Naive thymus-derived CD4-positive, alpha-beta T cell (primary cell): ENCODE measurements at regions of chr6 and their contacts with region 1.

Region 1: DNA sequence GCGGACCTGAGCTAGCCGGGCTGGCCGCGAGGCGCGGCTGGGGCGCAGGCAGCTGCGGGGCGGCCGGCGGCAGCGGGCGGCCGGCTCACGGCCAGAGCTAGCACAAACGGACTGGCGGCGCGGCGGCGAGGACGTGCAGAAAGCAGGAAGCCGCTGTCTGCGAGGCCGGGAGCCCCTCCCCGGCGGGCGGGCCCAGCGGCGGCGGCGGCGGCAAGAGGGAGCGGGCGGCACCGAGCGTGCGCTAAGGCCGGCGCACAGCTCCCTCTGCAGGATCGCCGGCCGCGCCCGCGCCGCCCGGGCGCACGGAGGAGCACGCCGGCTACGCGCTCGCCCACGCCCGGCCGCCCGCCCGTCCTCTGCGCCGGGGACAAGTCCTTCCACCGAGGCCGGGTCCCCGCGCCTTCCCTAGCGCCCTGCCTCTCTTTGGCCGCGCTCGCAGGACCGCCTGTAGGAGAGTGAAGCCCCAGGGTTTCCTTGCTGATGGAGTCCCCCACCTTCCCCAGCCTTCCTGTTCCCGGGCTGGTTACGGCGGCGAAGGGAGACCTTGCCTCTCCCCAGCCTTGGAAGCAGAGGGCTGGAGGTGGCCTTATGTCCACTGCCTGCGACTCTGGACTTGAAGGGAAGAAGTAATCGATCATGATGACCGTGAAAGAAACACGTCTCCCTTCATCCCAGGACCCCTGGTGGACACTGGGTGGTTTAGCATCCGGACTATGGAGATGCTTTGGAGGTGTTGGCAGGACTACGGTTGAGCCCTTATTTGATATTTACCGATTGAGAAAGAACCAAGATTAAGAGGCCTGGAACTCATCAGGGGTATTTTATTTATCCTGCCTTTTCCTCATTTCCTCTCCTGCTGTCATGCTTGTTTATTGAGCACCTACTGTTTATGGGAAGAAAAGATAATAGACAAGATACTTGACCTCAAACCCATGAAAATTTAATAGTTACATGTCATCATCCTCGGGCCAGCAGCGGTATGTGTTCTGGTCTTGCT is at the start of gene PREP:
- DNase-seq: peak; percentile 64 to 90 (median 81)
- ATAC-seq: peak; percentile 96
- H3K4me3 ChIP-seq: peak within 1 kb of the TSS; percentile 83
- H3K4me3 Mint-ChIP-seq: peak within 1 kb of the TSS; percentile 92 to 98 (median 94)
- H3K27ac ChIP-seq: peak within 1 kb of the TSS; percentile 66
- H3K27ac Mint-ChIP-seq: peak within 1 kb of the TSS; percentile 45 to 92 (median 76)
- H3K4me1 ChIP-seq: peaks cover 27 to 28% of the 10 kb centered on the region in 2 donors
- H3K4me1 Mint-ChIP-seq: peaks cover 43 to 58% (median 54%) of the 10 kb centered on the region in 7 donors
- H3K27me3 ChIP-seq: no peaks in the 10 kb centered on the region
- H3K27me3 Mint-ChIP-seq: peaks cover 0 to 18% (median 14%) of the 10 kb centered on the region in 5 donors
- total RNA-seq, gene PREP: 22.2 to 46.7 (median 32.1) TPM

Region 2: GRCh38 chr6:104653781-104654180 is 749.5 kb before region 1 on chr6:
- CTCF ChIA-PET with region 1: no interaction called
- POLR2A ChIA-PET with region 1: no interaction called
- intact Hi-C with region 1: no loop called
- DNase-seq: no peak
- ATAC-seq: no peak
- H3K4me3 ChIP-seq: no peak overlapping the region
- H3K4me3 Mint-ChIP-seq: no peak overlapping the region
- H3K27ac ChIP-seq: no peak overlapping the region
- H3K27ac Mint-ChIP-seq: no peak overlapping the region
- H3K4me1 ChIP-seq: no peaks in the 10 kb centered on the region
- H3K4me1 Mint-ChIP-seq: peaks cover 0 to 6% (median 0%) of the 10 kb centered on the region in 7 donors
- H3K27me3 ChIP-seq: no peaks in the 10 kb centered on the region
- H3K27me3 Mint-ChIP-seq: peaks cover 0 to 18% (median 4%) of the 10 kb centered on the region in 5 donors

Region 3: DNA sequence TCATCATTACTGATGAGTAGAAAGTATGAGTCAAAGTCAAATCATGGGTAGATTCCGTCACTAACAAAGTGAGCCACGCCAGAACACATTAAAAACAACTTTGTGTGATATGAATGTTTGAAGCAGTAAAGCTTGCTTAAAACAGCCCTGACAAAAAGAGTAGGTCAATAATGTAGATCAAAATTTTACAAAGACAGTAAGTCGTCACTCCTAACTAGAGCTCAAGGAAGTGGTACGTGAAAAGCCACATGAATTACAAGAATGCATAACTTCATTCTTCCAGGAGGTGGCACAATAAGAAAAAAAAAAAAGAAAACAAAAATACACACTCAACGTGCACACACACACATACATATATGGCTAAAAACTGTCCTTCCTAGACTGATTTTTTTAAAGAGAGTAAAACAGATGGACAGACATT is 613.5 kb before region 1 on chr6:
- CTCF ChIA-PET with region 1: no interaction called
- POLR2A ChIA-PET with region 1: no interaction called
- intact Hi-C with region 1: loop called (anchors 1 to 5 kb)
- DNase-seq: peak in 7 of 9 donors; percentile 43 to 78 (median 63)
- ATAC-seq: peak; percentile 96
- H3K4me3 ChIP-seq: no peak overlapping the region
- H3K4me3 Mint-ChIP-seq: peak overlapping the region in 7 of 10 donors; percentile 31 to 79 (median 49)
- H3K27ac ChIP-seq: no peak overlapping the region
- H3K27ac Mint-ChIP-seq: peak overlapping the region; percentile 21 to 86 (median 65)
- H3K4me1 ChIP-seq: peaks cover 8 to 10% of the 10 kb centered on the region in 2 donors
- H3K4me1 Mint-ChIP-seq: peaks cover 10 to 32% (median 19%) of the 10 kb centered on the region in 7 donors
- H3K27me3 ChIP-seq: no peaks in the 10 kb centered on the region
- H3K27me3 Mint-ChIP-seq: no peaks in the 10 kb centered on the region

Region 4: GRCh38 chr6:105135056-105135455 is 268.2 kb before region 1 on chr6:
- CTCF ChIA-PET with region 1: no interaction called
- POLR2A ChIA-PET with region 1: no interaction called
- intact Hi-C with region 1: loop called in 1 of 2 experiments (anchors 1 kb)
- DNase-seq: no peak
- ATAC-seq: no peak
- H3K4me3 ChIP-seq: no peak overlapping the region
- H3K4me3 Mint-ChIP-seq: peak overlapping the region in 3 of 10 donors; percentile 14 to 72 (median 61)
- H3K27ac ChIP-seq: no peak overlapping the region
- H3K27ac Mint-ChIP-seq: no peak overlapping the region
- H3K4me1 ChIP-seq: no peaks in the 10 kb centered on the region
- H3K4me1 Mint-ChIP-seq: peaks cover 0 to 17% (median 11%) of the 10 kb centered on the region in 7 donors
- H3K27me3 ChIP-seq: peaks cover 0 to 12% of the 10 kb centered on the region in 2 donors
- H3K27me3 Mint-ChIP-seq: peaks cover 53 to 72% (median 55%) of the 10 kb centered on the region in 5 donors

Region 5: GRCh38 chr6:105369145-105369544 is 34.1 kb before region 1 on chr6:
- CTCF ChIA-PET with region 1: no interaction called
- POLR2A ChIA-PET with region 1: no interaction called
- intact Hi-C with region 1: loop called in 1 of 2 experiments (anchors 2 kb)
- DNase-seq: no peak
- ATAC-seq: no peak
- H3K4me3 ChIP-seq: no peak overlapping the region
- H3K4me3 Mint-ChIP-seq: no peak overlapping the region
- H3K27ac ChIP-seq: no peak overlapping the region
- H3K27ac Mint-ChIP-seq: no peak overlapping the region
- H3K4me1 ChIP-seq: no peaks in the 10 kb centered on the region
- H3K4me1 Mint-ChIP-seq: peaks cover 0 to 9% (median 4%) of the 10 kb centered on the region in 7 donors
- H3K27me3 ChIP-seq: no peaks in the 10 kb centered on the region
- H3K27me3 Mint-ChIP-seq: no peaks in the 10 kb centered on the region

Region 6: GRCh38 chr6:106103728-106104109 is 700.5 kb after region 1 on chr6:
- CTCF ChIA-PET with region 1: no interaction called
- POLR2A ChIA-PET with region 1: no interaction called
- intact Hi-C with region 1: loop called in 1 of 2 experiments (anchors 5 kb)
- DNase-seq: peak in 4 of 9 donors; percentile 22 to 32 (median 29)
- ATAC-seq: peak; percentile 65
- H3K4me3 ChIP-seq: peak overlapping the region; percentile 42
- H3K4me3 Mint-ChIP-seq: peak overlapping the region; percentile 69 to 95 (median 78)
- H3K27ac ChIP-seq: no peak overlapping the region
- H3K27ac Mint-ChIP-seq: peak overlapping the region in 8 of 9 donors; percentile 48 to 99 (median 74)
- H3K4me1 ChIP-seq: peaks cover 25 to 32% of the 10 kb centered on the region in 2 donors
- H3K4me1 Mint-ChIP-seq: peaks cover 22 to 81% (median 54%) of the 10 kb centered on the region in 7 donors
- H3K27me3 ChIP-seq: no peaks in the 10 kb centered on the region
- H3K27me3 Mint-ChIP-seq: no peaks in the 10 kb centered on the region

Region 7: DNA sequence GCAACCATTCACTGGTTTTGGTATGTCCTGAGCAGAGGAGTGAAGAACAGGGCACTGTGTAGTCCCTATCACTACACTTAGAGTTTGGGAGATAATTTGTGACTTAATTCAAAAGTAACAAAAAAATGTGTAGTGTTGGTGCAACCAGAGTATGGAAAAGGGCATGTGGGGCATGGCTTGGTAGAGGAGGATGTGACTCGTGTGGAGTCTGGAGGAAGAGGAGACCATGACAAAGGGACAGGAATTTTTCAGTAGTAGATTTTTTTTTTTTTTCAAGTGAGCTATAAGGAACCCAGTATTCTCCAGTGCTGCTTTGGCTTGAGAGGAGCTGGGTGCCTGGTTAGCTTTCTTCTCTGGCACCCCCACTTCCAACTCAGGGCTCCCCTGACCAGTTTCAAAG is 1629.9 kb after region 1 on chr6:
- CTCF ChIA-PET with region 1: no interaction called
- POLR2A ChIA-PET with region 1: no interaction called
- intact Hi-C with region 1: loop called in 1 of 2 experiments (anchors 1 kb)
- DNase-seq: no peak
- ATAC-seq: no peak
- H3K4me3 ChIP-seq: no peak overlapping the region
- H3K4me3 Mint-ChIP-seq: no peak overlapping the region
- H3K27ac ChIP-seq: no peak overlapping the region
- H3K27ac Mint-ChIP-seq: peak overlapping the region in 1 of 9 donors; percentile 24
- H3K4me1 ChIP-seq: peaks cover 3 to 17% of the 10 kb centered on the region in 2 donors
- H3K4me1 Mint-ChIP-seq: peaks cover 22 to 56% (median 46%) of the 10 kb centered on the region in 7 donors
- H3K27me3 ChIP-seq: no peaks in the 10 kb centered on the region
- H3K27me3 Mint-ChIP-seq: no peaks in the 10 kb centered on the region